Dendritic cell treated with granulocyte-macrophage colony-stimulating factor and Interleukin-4, amounts not matched to agents 40 ng/mL and 50 ng/mL, for 4 days (primary cell): ENCODE measurements at regions of chr6 and their contacts with region 1.

Region 1: GRCh38 chr6:45922728-45923351 is 92.8 kb downstream of the CLIC5 start:
- H3K4me3 Mint-ChIP-seq: no peak overlapping the region
- H3K27ac Mint-ChIP-seq: no peak overlapping the region
- H3K4me1 Mint-ChIP-seq: peaks cover 6% of the 10 kb centered on the region
- H3K27me3 Mint-ChIP-seq: no peaks in the 10 kb centered on the region

Region 2: DNA sequence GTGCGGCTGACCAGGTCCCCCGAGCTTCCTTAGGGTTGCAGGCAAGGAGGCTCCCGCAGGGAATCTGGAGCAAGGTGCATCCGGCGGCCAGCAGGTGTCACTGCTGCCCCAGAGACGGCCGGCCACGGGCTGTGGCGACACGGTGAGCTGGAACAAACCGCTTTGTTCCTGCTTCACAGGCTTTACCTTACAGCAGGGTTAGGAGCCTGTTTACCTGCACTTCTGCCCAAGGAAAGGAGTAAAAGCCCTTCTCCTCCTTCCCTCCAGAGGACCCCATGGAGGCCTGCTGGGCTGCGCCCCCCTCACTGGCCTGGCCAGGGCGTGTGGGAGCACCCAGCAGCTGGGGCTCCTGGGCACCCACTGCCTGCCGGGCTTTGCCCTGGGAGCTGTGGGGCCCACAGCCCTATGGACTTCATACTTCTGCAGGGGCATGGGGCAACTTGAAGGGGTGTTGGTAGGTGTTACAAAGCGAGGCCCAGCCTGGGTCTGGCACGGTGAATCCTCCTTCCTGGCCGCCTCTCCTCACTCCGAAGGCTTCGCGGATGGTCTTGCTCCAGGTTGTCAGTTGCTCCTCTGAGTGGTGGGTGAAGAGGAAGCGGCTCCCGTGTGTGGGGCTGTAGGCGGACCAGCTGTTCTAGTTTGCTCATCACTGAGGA is 1446.9 kb before region 1 on chr6:
- intact Hi-C with region 1: loop called (anchors 2 kb)
- H3K4me3 Mint-ChIP-seq: no peak overlapping the region
- H3K27ac Mint-ChIP-seq: no peak overlapping the region
- H3K4me1 Mint-ChIP-seq: peaks cover 26% of the 10 kb centered on the region
- H3K27me3 Mint-ChIP-seq: peaks cover 18% of the 10 kb centered on the region

Region 3: DNA sequence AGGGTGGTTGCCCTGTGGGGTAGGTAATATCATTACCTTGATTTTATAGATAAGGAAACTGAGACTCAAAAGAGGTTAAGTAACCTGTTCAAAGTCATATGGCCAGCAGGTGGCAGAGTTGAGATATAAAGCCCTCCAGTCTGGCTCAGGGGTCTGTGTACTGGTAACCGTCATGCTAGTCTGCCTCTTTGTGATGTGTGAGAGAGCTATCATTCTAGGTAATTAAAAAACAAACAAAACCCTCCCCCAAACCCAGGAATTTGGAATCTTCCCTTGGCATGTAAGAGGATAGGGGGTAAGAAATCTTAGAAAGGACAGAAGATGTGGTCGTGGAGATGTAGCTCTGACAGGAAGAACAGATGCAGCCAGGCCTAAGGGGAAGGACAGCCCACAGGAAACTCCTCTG is 1329.3 kb before region 1 on chr6:
- intact Hi-C with region 1: loop called (anchors 1 kb)
- H3K4me3 Mint-ChIP-seq: no peak overlapping the region
- H3K27ac Mint-ChIP-seq: no peak overlapping the region
- H3K4me1 Mint-ChIP-seq: peaks cover 30% of the 10 kb centered on the region
- H3K27me3 Mint-ChIP-seq: peaks cover 4% of the 10 kb centered on the region

Region 4: GRCh38 chr6:45741437-45742171 is 181.2 kb before region 1 on chr6:
- intact Hi-C with region 1: loop called (anchors 10 kb)
- H3K4me3 Mint-ChIP-seq: peak overlapping the region; percentile 23
- H3K27ac Mint-ChIP-seq: no peak overlapping the region
- H3K4me1 Mint-ChIP-seq: peaks cover 37% of the 10 kb centered on the region
- H3K27me3 Mint-ChIP-seq: no peaks in the 10 kb centered on the region

Region 5: GRCh38 chr6:45880159-45880558 is 42.7 kb before region 1 on chr6:
- intact Hi-C with region 1: no loop called
- H3K4me3 Mint-ChIP-seq: no peak overlapping the region
- H3K27ac Mint-ChIP-seq: no peak overlapping the region
- H3K4me1 Mint-ChIP-seq: peaks cover 5% of the 10 kb centered on the region
- H3K27me3 Mint-ChIP-seq: no peaks in the 10 kb centered on the region

Region 6: DNA sequence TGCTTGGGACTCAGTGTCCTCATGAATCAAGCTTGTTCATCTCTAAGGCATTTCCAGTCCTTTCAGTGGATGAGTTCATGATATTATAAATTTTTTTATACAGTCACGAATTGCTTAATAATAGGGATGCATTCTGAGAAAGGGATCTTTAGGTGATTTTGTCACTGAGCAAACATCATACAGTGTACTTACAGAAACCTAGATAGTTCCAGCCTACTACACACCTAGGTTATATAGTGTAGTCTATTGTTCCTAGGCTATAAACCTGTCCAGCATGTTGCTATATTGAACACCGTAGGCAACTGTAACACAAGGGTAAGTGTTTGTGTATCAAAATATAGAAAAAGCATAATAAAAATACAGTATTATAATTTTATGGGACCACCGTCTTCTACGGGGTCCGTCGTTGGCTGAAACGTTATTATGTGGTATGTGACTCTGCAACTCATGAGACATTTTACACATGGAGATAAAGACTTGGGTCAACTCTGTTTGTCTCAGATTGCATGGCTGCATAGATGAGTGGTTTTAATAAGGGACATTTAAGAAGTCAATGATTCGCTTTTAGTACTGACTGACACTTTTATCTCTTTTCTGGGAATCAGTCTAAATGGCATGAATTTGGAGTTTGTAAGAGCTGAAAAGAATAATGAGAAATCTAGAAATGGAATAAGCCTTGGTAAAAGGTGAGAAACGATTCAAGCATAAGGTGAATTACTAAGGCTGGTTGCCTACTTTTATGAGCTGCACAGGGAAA is 59.6 kb after region 1 on chr6:
- intact Hi-C with region 1: no loop called
- H3K4me3 Mint-ChIP-seq: no peak overlapping the region
- H3K27ac Mint-ChIP-seq: no peak overlapping the region
- H3K4me1 Mint-ChIP-seq: no peaks in the 10 kb centered on the region
- H3K27me3 Mint-ChIP-seq: no peaks in the 10 kb centered on the region